ENCODE measurements at regions of chr12 and their contacts with region 1.

Region 1: DNA sequence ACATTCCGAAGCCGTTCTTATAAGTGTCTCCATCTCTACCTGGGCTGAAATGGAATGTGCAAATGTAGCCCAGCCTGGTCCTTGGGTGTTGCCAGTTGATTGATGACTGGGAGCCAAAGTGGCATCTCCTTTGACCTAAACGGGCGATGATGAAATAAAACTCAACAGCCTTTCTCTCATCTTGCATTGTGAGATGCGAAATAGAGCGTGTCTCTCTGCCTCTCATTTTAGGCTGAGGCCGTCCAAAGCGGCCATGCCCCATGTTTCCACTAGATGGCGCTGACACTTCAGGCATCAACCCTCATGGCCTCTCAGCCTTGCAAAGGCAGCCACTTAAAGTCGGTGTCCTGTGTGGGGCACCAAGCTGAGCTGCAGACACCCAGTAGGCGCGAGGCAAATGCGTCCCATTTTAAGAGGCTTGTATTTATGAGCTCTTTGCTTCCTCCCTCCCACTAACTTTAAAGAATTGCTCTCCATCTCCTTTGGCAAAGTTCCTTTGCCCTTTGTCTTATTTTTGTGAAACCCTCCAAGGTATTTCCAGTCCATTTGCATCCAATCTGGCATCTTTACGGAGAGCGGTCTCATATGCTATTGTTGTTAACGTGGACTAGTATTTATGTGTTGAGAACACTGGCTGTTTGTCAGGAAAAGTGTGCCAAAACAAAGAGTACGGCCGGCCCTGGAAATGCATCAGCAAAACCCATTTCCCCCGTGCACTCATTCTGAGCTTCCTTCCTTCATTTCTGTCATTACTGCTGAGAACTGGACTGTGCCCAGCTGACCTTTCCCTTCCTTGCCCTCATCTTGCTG is 25.0 kb downstream of the GPRC5A start:
- DNase-seq: peak; percentile 72 to 89 (median 83)
- ATAC-seq: peak; percentile 99
- H3K4me3 ChIP-seq: no peak overlapping the region
- H3K4me3 Mint-ChIP-seq: no peak overlapping the region
- H3K27ac ChIP-seq: no peak overlapping the region
- H3K27ac Mint-ChIP-seq: no peak overlapping the region
- H3K4me1 ChIP-seq: peaks cover 7% of the 10 kb centered on the region
- H3K4me1 Mint-ChIP-seq: peaks cover 7% of the 10 kb centered on the region
- H3K27me3 ChIP-seq: peaks cover 0 to 4% of the 10 kb centered on the region in 2 experiments
- H3K27me3 Mint-ChIP-seq: peaks cover 12% of the 10 kb centered on the region
- CTCF ChIP-seq: peak; percentile 92

Region 2: GRCh38 chr12:12983420-12984035 is 67.2 kb after region 1 on chr12:
- CTCF ChIA-PET with region 1: no interaction called
- POLR2A ChIA-PET with region 1: no interaction called
- intact Hi-C with region 1: loop called (anchors 1 to 2 kb)
- DNase-seq: peak in 4 of 14 experiments; percentile 16 to 41 (median 30)
- ATAC-seq: peak; percentile 44
- H3K4me3 ChIP-seq: no peak overlapping the region
- H3K4me3 Mint-ChIP-seq: no peak overlapping the region
- H3K27ac ChIP-seq: no peak overlapping the region
- H3K27ac Mint-ChIP-seq: no peak overlapping the region
- H3K4me1 ChIP-seq: no peaks in the 10 kb centered on the region
- H3K4me1 Mint-ChIP-seq: no peaks in the 10 kb centered on the region
- H3K27me3 ChIP-seq: no peaks in the 10 kb centered on the region
- H3K27me3 Mint-ChIP-seq: no peaks in the 10 kb centered on the region
- CTCF ChIP-seq: peak; percentile 59

Region 3: DNA sequence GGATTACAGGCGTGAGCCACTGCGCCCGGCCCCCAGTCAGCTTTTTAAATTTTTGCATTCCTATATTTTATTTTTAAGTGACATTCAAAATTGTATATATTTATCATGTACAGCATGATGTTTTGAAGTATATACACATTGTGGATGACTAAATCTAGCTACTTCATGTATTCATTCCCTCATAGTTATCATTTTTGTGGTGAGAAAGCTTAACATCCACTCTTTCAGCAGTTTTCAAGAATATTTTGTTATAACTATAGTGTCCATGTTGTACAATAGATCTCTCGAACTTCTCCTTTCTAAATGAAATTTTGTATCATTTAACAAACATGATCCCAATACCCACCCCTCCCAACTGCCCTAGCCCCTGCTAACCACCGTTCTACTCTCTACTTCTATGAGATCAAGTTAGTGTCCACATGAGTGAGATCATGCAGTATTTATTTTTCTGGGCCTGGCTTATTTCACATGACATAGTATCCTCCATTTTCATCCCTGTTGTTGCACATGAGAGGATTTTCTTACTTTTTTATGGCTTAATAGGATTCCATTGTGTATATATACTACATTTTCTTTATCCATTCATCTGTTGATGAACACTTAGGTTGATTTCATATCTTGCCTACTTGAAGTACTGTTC is 92.5 kb after region 1 on chr12:
- CTCF ChIA-PET with region 1: no interaction called
- POLR2A ChIA-PET with region 1: no interaction called
- intact Hi-C with region 1: no loop called
- DNase-seq: no peak
- ATAC-seq: no peak
- H3K4me3 ChIP-seq: no peak overlapping the region
- H3K4me3 Mint-ChIP-seq: no peak overlapping the region
- H3K27ac ChIP-seq: no peak overlapping the region
- H3K27ac Mint-ChIP-seq: no peak overlapping the region
- H3K4me1 ChIP-seq: no peaks in the 10 kb centered on the region
- H3K4me1 Mint-ChIP-seq: no peaks in the 10 kb centered on the region
- H3K27me3 ChIP-seq: no peaks in the 10 kb centered on the region
- H3K27me3 Mint-ChIP-seq: no peaks in the 10 kb centered on the region
- CTCF ChIP-seq: no peak

Region 4: DNA sequence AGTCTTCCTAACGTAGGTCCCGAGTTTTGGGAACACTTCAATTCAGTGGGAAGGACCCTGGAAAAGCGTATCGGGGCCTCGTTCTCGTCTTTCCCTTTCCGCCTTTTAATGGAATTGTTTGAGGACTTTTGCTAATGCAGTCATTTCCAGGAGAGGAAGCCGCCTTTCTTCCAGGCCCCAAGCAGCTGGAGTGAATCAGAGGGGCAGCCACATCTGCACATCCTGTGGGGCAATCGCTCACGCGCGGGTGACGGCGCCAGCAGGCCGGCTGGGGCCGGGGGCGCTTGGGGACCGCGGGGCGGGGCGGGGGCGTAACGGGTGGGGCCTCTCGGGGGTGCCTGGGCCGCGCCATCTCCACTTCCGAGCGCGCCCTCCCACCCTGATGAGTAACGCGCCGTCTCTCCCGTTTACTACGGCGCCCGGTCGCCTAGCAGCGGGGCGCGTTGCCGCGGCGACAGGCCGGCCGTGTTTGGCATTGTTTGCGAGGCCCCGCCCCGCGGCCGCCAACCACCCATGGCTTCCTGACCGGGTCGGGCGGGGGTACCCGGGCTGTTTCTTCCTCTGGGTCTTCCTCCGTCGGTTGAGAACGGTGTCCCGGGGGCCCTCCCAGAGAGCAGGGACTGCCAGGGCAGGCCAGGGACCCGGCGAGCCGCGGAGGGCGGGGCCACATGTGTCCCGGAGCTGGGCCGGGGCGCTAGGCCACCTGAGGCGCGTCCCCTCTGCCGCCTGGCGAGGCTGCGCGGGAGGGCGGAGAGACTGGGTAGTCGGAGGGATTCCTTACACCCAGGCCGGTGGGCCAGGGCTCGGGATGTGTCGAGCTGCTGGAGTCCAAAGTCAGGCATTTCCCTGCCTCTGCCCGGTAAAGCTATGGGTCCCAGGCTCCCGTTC is 184.8 kb after region 1 on chr12:
- CTCF ChIA-PET with region 1: no interaction called
- POLR2A ChIA-PET with region 1: no interaction called
- intact Hi-C with region 1: loop called (anchors 2 kb)
- DNase-seq: peak; percentile 87 to 98 (median 92)
- ATAC-seq: peak; percentile 87
- H3K4me3 ChIP-seq: peak overlapping the region; percentile 64
- H3K4me3 Mint-ChIP-seq: peak overlapping the region; percentile 87
- H3K27ac ChIP-seq: peak overlapping the region; percentile 93 to 94
- H3K27ac Mint-ChIP-seq: peak overlapping the region; percentile 94
- H3K4me1 ChIP-seq: peaks cover 38% of the 10 kb centered on the region
- H3K4me1 Mint-ChIP-seq: peaks cover 53% of the 10 kb centered on the region
- H3K27me3 ChIP-seq: no peaks in the 10 kb centered on the region
- H3K27me3 Mint-ChIP-seq: no peaks in the 10 kb centered on the region
- CTCF ChIP-seq: no peak

Region 5: DNA sequence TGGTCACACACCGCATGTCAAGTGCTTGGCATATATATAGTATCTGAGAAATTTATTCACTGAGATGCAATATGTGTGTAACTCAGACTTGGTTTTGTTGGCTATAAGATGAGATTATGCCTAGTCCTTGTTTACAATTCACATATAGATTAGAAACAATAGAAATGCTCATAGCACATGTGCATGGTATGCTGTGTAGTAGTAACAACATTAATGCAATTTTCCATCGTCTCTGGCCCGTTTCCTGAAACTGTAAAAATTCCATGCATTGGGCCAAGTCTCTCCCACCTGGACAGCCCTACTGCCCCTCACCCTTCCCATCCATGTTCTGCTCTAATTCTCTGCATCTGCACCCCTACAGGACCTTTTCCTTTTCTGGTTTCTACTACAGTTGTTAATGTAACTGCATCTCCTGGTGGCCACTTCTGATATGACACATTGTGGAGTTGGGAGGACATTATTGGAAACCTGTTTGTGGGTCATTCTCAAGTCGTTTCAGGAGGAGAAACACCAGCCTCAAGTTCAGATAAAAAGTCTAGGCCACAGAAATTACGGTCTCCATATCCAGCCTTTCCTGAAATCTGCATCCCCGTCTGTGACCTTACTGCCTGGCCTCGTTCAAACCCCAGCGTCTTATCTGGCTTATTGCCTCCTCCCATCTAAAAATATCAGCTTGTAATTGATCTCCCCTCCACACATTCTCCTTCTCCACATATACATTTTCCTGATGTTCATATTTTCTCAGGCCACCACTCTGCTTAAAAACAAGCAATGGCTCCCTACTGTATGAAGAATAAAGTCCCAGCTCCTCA is 317.7 kb after region 1 on chr12:
- CTCF ChIA-PET with region 1: no interaction called
- POLR2A ChIA-PET with region 1: no interaction called
- intact Hi-C with region 1: loop called (anchors 1 kb)
- DNase-seq: peak in 9 of 14 experiments; percentile 16 to 64 (median 24)
- ATAC-seq: peak; percentile 59
- H3K4me3 ChIP-seq: no peak overlapping the region
- H3K4me3 Mint-ChIP-seq: no peak overlapping the region
- H3K27ac ChIP-seq: no peak overlapping the region
- H3K27ac Mint-ChIP-seq: no peak overlapping the region
- H3K4me1 ChIP-seq: no peaks in the 10 kb centered on the region
- H3K4me1 Mint-ChIP-seq: no peaks in the 10 kb centered on the region
- H3K27me3 ChIP-seq: peaks cover 0 to 3% of the 10 kb centered on the region in 2 experiments
- H3K27me3 Mint-ChIP-seq: peaks cover 17% of the 10 kb centered on the region
- CTCF ChIP-seq: peak; percentile 65

Region 6: GRCh38 chr12:14167005-14167628 is 1250.8 kb after region 1 on chr12:
- CTCF ChIA-PET with region 1: no interaction called
- POLR2A ChIA-PET with region 1: interaction called, 3 read pairs
- intact Hi-C with region 1: loop called (anchors 2 kb)
- DNase-seq: peak in 9 of 14 experiments; percentile 1 to 56 (median 18)
- ATAC-seq: peak; percentile 43
- H3K4me3 ChIP-seq: no peak overlapping the region
- H3K4me3 Mint-ChIP-seq: no peak overlapping the region
- H3K27ac ChIP-seq: no peak overlapping the region
- H3K27ac Mint-ChIP-seq: no peak overlapping the region
- H3K4me1 ChIP-seq: no peaks in the 10 kb centered on the region
- H3K4me1 Mint-ChIP-seq: no peaks in the 10 kb centered on the region
- H3K27me3 ChIP-seq: no peaks in the 10 kb centered on the region
- H3K27me3 Mint-ChIP-seq: peaks cover 22% of the 10 kb centered on the region
- CTCF ChIP-seq: peak; percentile 99

Measured in CD4-positive, alpha-beta T cell (primary cell).